Prostate gland (tissue), 2 donors: ENCODE measurements at regions of chr16 and their contacts with region 1.

Region 1: DNA sequence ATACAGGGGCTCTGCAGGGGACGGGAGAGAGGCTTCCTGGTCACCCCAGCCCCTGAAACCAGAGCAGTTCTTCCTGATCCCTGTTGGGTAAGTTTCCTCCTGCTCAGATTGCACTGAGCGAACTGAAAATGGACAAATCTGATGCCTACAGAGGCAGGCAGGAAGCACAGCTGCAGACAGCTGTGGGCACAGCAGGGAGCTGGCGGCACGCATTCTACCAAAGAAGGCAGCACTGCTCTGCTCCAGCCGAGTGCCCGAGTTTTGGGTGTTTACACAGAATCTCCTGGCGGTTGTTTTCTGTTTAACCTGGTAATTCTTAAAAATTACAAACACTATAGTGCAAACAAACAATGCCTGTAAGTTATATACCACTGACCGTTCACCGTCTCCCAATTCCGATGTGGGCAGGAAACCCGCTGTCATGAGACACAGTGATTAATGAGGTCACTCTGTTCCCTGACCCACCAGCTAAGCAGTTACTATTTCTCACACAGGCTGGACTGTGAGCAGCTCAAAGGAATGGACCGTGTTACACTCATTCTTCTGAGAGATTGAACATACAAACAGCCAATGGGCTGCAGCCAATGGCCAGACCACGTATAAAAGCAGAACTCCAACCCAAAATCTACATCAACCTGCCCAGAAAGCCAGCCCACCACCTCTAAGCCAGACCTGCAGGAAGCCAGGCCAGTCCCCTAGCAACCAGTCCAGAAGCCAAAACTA is 25.5 kb downstream of the NSMCE1 start:
- DNase-seq: no peak
- H3K4me3 ChIP-seq: no peak overlapping the region
- H3K27ac ChIP-seq: peak overlapping the region; percentile 55 to 62
- H3K4me1 ChIP-seq: peaks cover 4% of the 10 kb centered on the region
- H3K27me3 ChIP-seq: no peaks in the 10 kb centered on the region
- CTCF ChIP-seq: no peak
- POLR2A ChIP-seq: no peak

Region 2: GRCh38 chr16:27313422-27314160 is 70.6 kb after region 1 on chr16 and contains the start of gene IL4R:
- intact Hi-C with region 1: loop called (anchors 5 kb)
- DNase-seq: peak; percentile 42
- H3K4me3 ChIP-seq: peak within 1 kb of the TSS; percentile 76 to 79
- H3K27ac ChIP-seq: peak within 1 kb of the TSS; percentile 91 to 92
- H3K4me1 ChIP-seq: peaks cover 6% of the 10 kb centered on the region
- H3K27me3 ChIP-seq: no peaks in the 10 kb centered on the region
- CTCF ChIP-seq: no peak
- POLR2A ChIP-seq: peak; percentile 50
- total RNA-seq, gene IL4R: 30.7 to 89.2 TPM

Region 3: GRCh38 chr16:27330542-27330941 is 87.5 kb after region 1 on chr16:
- intact Hi-C with region 1: loop called (anchors 5 kb)
- DNase-seq: no peak
- H3K4me3 ChIP-seq: no peak overlapping the region
- H3K27ac ChIP-seq: peak overlapping the region; percentile 63 to 80
- H3K4me1 ChIP-seq: peaks cover 7% of the 10 kb centered on the region
- H3K27me3 ChIP-seq: no peaks in the 10 kb centered on the region
- CTCF ChIP-seq: no peak
- POLR2A ChIP-seq: no peak